Right cardiac atrium (tissue), 5 donors: ENCODE measurements at regions of chr10 and their contacts with region 1.

Region 1: GRCh38 chr10:29998142-29998808 is 61.1 kb downstream of the JCAD start:
- DNase-seq: peak; percentile 75 to 88 (median 82)
- ATAC-seq: peak; percentile 44 to 61
- H3K4me3 ChIP-seq: no peak overlapping the region
- H3K27ac ChIP-seq: no peak overlapping the region
- H3K4me1 ChIP-seq: peaks cover 9% of the 10 kb centered on the region
- H3K27me3 ChIP-seq: no peaks in the 10 kb centered on the region

Region 2: DNA sequence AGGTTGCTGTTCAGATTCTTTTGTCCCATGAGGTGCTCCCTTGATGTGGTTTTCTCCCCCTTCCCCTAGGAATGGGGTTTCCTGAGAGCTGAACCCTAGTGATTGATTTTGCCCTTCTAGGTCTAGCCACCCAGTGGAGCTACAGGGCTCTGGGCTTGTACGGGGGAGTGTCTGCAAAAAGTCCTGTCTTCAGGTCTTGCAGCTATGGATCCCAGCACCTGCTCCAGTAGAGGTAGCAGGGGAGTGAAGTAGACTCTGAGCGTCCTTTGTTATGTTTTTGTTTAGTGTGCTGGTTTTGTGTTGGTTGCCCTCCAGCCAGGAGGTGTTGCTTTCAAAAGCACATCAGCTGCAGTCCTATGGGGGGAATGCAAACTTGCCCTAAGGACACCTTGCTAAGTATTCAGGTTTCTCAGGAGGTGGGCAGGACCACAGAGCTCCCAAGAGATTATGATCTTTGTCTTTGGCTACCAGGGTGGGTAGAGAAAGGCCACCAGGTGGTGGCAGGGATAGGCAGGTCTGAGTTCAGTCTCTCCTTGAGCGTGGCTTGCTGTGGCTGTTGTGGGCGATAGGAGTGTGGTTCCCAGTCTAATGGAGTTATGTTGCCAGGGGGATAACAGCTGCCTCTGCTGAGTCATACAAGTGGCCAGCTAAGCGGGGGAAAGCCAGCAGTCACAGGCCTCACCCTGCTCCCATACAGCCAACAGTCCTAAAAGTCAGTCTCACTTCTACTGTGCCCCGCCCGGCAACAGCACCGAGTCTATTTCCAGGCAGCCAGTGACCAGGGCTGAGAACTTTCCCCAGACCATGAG is 153.5 kb after region 1 on chr10:
- intact Hi-C with region 1: no loop called
- DNase-seq: peak; percentile 84 to 85 (median 84)
- ATAC-seq: peak; percentile 87 to 89
- H3K4me3 ChIP-seq: no peak overlapping the region
- H3K27ac ChIP-seq: no peak overlapping the region
- H3K4me1 ChIP-seq: no peaks in the 10 kb centered on the region
- H3K27me3 ChIP-seq: no peaks in the 10 kb centered on the region

Region 3: DNA sequence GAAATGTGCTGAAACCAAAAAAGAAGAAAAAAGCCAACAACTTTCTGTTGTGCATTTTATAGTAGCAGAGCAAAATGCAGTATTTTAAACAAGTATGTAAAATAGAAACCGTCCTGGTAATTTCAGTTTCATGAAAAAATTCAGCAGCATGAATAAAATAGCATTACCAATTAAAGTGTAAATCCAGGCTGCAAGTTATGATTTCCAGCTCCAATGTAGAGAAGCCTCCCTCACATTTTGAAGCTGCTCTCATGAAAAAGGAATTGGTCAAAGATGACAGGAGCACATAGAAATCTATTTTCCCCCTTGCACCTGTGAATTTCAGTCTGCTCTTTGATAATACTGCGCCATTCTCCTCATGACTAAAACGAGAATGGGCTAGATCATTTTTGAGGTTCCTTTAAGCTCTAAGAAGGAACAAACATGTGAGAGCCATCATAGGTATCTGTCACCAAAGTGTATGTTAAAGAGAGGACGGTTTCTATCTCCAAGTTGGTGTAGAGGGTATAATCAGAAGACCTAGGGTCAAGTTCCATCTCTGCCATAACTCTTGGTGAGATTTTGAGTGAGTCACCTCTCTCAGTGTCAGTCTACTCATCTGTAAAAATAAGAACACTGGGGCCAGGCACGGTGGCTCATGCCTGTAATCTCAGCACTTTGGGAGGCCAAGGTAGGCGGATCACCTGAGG is 243.3 kb after region 1 on chr10:
- intact Hi-C with region 1: loop called (anchors 2 to 5 kb)
- DNase-seq: no peak
- ATAC-seq: no peak
- H3K4me3 ChIP-seq: no peak overlapping the region
- H3K27ac ChIP-seq: no peak overlapping the region
- H3K4me1 ChIP-seq: peaks cover 1% of the 10 kb centered on the region
- H3K27me3 ChIP-seq: no peaks in the 10 kb centered on the region